Sciatic nerve (tissue), 2 donors: ENCODE measurements at regions of chr12 and their contacts with region 1.

Region 1: GRCh38 chr12:99059824-99060511 is 414.9 kb downstream of the APAF1 start:
- DNase-seq: no peak
- ATAC-seq: peak; percentile 81

Region 2: DNA sequence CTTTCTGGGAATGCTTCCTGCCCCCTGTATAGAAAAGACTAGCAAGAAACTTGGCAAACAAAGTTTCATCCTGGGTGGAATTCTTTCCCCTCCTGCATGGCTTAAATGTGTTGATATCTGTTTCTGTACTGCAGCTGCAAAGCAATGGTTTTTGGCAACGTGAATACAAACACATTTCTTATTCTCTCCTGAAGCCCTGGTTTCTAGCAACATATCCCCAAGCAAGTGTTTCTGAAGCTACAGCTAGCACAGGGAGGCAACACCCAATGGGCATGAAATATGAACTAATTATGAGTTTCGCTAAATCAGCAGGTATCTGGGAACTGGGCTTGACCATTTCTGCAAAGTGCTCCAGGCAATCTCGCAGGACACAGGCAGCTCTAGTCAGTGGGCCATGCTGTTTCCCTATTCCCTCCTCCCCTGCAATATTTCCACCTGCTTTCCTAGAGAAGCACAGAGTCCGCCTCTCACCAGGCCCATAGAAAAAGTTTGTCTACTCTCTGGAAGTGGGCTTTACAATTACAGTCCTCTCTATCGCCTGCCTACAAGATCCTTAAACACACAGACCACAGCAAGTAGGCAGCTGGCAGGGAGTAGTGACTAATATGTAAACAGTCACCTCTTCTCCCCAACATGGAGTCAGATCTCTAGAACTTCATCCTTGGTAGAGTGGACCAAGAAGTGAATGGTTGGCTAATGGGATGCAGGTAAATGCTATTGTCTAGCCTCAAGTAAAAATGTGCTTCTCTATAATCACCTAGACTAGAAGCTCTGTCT is 936.8 kb before region 1 on chr12:
- intact Hi-C with region 1: no loop called
- DNase-seq: no peak
- ATAC-seq: peak; percentile 46

Region 3: GRCh38 chr12:98294051-98294805 is 765.7 kb before region 1 on chr12:
- intact Hi-C with region 1: loop called (anchors 5 kb)
- DNase-seq: no peak
- ATAC-seq: no peak

Region 4: GRCh38 chr12:99281277-99281676 is 221.3 kb after region 1 on chr12:
- intact Hi-C with region 1: no loop called
- DNase-seq: no peak
- ATAC-seq: no peak